HEK293 (cell line): ENCODE measurements at regions of chr11 and their contacts with region 1.

Region 1: DNA sequence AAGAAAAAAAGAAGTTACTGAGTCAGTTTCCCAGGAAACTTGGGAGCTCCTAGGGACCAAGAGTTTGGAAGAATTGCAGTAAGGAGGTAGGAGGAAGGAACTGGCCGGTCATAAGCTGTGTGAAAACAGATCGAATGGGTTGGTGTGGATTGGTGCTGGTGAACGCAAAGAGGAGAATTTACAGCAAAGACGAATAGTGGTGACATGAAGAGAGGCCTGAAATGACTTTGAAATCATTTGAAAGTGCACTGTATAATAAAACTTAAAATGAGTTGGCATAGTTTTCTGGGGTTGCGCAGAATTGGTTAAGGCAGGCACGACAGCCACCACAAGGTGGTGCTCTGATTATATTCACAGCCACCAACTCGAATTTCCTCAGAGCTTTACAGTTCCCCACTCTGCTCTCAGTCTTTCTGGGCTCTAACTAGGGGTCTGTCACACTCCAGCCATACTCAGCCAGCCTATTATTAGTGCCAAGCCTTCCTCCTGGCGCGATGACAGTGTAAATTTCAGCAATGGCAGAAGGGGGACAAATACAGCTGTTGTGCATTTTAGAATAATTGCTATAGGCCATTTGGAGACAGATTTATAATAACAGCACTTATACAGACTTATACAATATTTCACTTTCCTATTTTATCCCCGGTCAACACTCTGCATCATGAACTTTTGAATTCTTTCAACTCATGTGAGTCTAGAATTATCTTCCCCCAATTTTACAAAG is 8.3 kb upstream of the HTR3B start:
- H3K4me3 ChIP-seq: no peak overlapping the region
- H3K27ac ChIP-seq: peak overlapping the region; percentile 2; the same call in 1 of the 2 replicates
- H3K4me1 ChIP-seq: no peaks in the 10 kb centered on the region; the same call in 1 of the 2 replicates
- CTCF ChIP-seq: peak; percentile 59

Region 2: DNA sequence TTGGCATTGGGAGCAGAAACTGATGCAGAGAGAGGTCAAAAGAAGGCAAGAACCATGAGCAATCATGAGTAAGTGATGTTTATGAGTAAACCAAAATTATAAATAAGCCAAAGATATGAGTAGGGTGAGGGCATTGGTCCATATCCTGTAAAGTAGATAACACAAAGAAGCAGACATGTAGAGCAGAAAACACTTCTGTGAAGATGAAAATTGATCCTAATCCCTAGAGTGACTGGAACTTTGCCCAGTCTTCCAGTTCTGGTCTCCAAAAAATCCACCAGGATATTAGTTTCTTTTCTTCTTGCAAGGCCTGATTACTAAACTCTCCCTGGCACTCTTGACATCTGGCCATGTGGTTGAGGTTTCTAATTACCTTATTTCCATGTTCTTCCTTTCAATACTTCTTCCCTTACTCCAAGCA is 407.4 kb before region 1 on chr11:
- CTCF ChIA-PET with region 1: no interaction called
- POLR2A ChIA-PET with region 1: no interaction called
- H3K4me3 ChIP-seq: no peak overlapping the region
- H3K27ac ChIP-seq: no peak overlapping the region
- H3K4me1 ChIP-seq: no peaks in the 10 kb centered on the region
- CTCF ChIP-seq: no peak

Region 3: DNA sequence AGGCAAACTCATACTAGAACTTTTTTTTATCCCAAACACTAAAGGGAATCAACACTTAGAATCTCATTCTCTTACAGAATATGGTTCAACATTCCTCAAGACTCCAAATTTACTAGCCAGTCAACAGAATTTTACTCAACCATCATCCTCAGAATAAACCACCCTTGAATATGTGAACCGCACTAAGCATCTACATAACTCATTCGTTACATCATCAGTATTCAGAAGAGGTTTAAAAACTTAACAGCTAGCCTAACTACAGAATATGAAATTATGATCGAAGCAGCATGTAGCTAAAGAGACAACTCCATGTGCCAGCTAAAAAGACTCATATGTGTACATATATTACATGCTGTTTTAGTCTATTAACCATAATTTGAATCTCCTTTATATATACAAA is 68.8 kb before region 1 on chr11:
- CTCF ChIA-PET with region 1: no interaction called
- POLR2A ChIA-PET with region 1: no interaction called
- H3K4me3 ChIP-seq: no peak overlapping the region
- H3K27ac ChIP-seq: no peak overlapping the region
- H3K4me1 ChIP-seq: no peaks in the 10 kb centered on the region
- CTCF ChIP-seq: no peak

Region 4: GRCh38 chr11:113875234-113876073 is 20.9 kb before region 1 on chr11 and contains the start of gene USP28:
- CTCF ChIA-PET with region 1: interaction called, 28 read pairs
- POLR2A ChIA-PET with region 1: interaction called, 8 read pairs
- H3K4me3 ChIP-seq: peak within 1 kb of the TSS; percentile 69
- H3K27ac ChIP-seq: peak within 1 kb of the TSS; percentile 77
- H3K4me1 ChIP-seq: no peaks in the 10 kb centered on the region
- CTCF ChIP-seq: no peak

Region 5: DNA sequence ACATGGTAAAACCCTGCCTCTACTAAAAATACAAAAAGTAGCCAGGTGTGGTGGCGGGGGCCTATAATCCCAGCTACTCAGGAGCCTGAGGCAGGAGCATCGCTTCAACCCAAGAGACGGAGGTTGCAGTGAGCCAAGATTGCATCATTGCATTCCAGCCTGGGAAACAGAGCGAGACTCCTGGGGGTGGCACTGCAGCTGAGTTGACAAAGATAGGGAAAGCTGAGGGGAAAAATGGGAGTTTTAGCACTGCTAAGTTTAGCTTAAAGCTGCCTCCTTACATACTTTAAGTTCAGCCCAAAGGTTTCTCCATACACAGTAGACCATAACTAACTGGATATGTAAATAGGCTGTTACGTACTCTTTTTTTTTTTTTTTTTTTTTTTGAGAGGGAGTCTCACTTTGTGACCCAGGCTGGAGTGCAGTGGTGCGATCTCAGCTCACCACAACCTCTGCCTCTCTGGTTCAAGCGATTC is 11.9 kb before region 1 on chr11:
- CTCF ChIA-PET with region 1: interaction called, 11 read pairs
- POLR2A ChIA-PET with region 1: interaction called, 4 read pairs
- H3K4me3 ChIP-seq: no peak overlapping the region
- H3K27ac ChIP-seq: peak overlapping the region; percentile 76; the same call in 1 of the 2 replicates
- H3K4me1 ChIP-seq: no peaks in the 10 kb centered on the region; the same call in 1 of the 2 replicates
- CTCF ChIP-seq: no peak

Region 6: GRCh38 chr11:115552151-115552550 is 1655.8 kb after region 1 on chr11:
- CTCF ChIA-PET with region 1: no interaction called
- POLR2A ChIA-PET with region 1: no interaction called
- H3K4me3 ChIP-seq: no peak overlapping the region
- H3K27ac ChIP-seq: no peak overlapping the region
- H3K4me1 ChIP-seq: no peaks in the 10 kb centered on the region
- CTCF ChIP-seq: no peak